CD4-positive, alpha-beta T cell (primary cell): ENCODE measurements at regions of chr14 and their contacts with region 1.

Region 1: GRCh38 chr14:54347997-54348611 is 48.7 kb upstream of the CDKN3 start:
- DNase-seq: peak in 3 of 14 experiments; percentile 38 to 39 (median 39)
- ATAC-seq: no peak
- H3K4me3 ChIP-seq: no peak overlapping the region
- H3K4me3 Mint-ChIP-seq: no peak overlapping the region
- H3K27ac ChIP-seq: no peak overlapping the region
- H3K27ac Mint-ChIP-seq: no peak overlapping the region
- H3K4me1 ChIP-seq: no peaks in the 10 kb centered on the region
- H3K4me1 Mint-ChIP-seq: peaks cover 3% of the 10 kb centered on the region
- H3K27me3 ChIP-seq: no peaks in the 10 kb centered on the region
- H3K27me3 Mint-ChIP-seq: peaks cover 10% of the 10 kb centered on the region
- CTCF ChIP-seq: peak; percentile 38

Region 2: GRCh38 chr14:53295985-53296582 is 1052.0 kb before region 1 on chr14:
- CTCF ChIA-PET with region 1: no interaction called
- POLR2A ChIA-PET with region 1: no interaction called
- intact Hi-C with region 1: loop called in 1 of 2 experiments (anchors 10 kb)
- DNase-seq: peak in 5 of 14 experiments; percentile 11 to 65 (median 39)
- ATAC-seq: no peak
- H3K4me3 ChIP-seq: no peak overlapping the region
- H3K4me3 Mint-ChIP-seq: no peak overlapping the region
- H3K27ac ChIP-seq: no peak overlapping the region
- H3K27ac Mint-ChIP-seq: no peak overlapping the region
- H3K4me1 ChIP-seq: no peaks in the 10 kb centered on the region
- H3K4me1 Mint-ChIP-seq: no peaks in the 10 kb centered on the region
- H3K27me3 ChIP-seq: no peaks in the 10 kb centered on the region
- H3K27me3 Mint-ChIP-seq: no peaks in the 10 kb centered on the region
- CTCF ChIP-seq: peak; percentile 88